ENCODE measurements at regions of chr14 and their contacts with region 1.

Region 1: GRCh38 chr14:104665657-104666522 is 23.5 kb upstream of the INF2 start:
- DNase-seq: peak; percentile 77 to 86
- ATAC-seq: peak; percentile 94 to 95
- H3K4me3 ChIP-seq: no peak overlapping the region
- H3K27ac ChIP-seq: peak overlapping the region; percentile 70 to 85
- H3K4me1 ChIP-seq: peaks cover 22% of the 10 kb centered on the region
- CTCF ChIP-seq: peak; percentile 54
- EP300 ChIP-seq: no peak
- POLR2A ChIP-seq: no peak
- RAD21 ChIP-seq: peak; percentile 59 to 61

Region 2: GRCh38 chr14:104610749-104611310 is 55.1 kb before region 1 on chr14:
- CTCF ChIA-PET with region 1: no interaction called
- POLR2A ChIA-PET with region 1: no interaction called
- DNase-seq: no peak
- ATAC-seq: no peak; a peak in 1 of 6 replicates
- H3K4me3 ChIP-seq: no peak overlapping the region
- H3K27ac ChIP-seq: no peak overlapping the region
- H3K4me1 ChIP-seq: no peaks in the 10 kb centered on the region
- CTCF ChIP-seq: no peak
- EP300 ChIP-seq: no peak
- POLR2A ChIP-seq: no peak
- RAD21 ChIP-seq: no peak

Region 3: GRCh38 chr14:104650057-104650981 is 15.6 kb before region 1 on chr14:
- CTCF ChIA-PET with region 1: interaction called, 15 read pairs
- POLR2A ChIA-PET with region 1: no interaction called
- DNase-seq: peak; percentile 53 to 82
- ATAC-seq: peak; percentile 88 to 95
- H3K4me3 ChIP-seq: peak overlapping the region; percentile 33
- H3K27ac ChIP-seq: peak overlapping the region; percentile 66 to 86
- H3K4me1 ChIP-seq: peaks cover 5% of the 10 kb centered on the region; the same call in 2 of the 3 replicates
- CTCF ChIP-seq: peak; percentile 98
- EP300 ChIP-seq: no peak
- POLR2A ChIP-seq: no peak
- RAD21 ChIP-seq: peak; percentile 87 to 97

Region 4: DNA sequence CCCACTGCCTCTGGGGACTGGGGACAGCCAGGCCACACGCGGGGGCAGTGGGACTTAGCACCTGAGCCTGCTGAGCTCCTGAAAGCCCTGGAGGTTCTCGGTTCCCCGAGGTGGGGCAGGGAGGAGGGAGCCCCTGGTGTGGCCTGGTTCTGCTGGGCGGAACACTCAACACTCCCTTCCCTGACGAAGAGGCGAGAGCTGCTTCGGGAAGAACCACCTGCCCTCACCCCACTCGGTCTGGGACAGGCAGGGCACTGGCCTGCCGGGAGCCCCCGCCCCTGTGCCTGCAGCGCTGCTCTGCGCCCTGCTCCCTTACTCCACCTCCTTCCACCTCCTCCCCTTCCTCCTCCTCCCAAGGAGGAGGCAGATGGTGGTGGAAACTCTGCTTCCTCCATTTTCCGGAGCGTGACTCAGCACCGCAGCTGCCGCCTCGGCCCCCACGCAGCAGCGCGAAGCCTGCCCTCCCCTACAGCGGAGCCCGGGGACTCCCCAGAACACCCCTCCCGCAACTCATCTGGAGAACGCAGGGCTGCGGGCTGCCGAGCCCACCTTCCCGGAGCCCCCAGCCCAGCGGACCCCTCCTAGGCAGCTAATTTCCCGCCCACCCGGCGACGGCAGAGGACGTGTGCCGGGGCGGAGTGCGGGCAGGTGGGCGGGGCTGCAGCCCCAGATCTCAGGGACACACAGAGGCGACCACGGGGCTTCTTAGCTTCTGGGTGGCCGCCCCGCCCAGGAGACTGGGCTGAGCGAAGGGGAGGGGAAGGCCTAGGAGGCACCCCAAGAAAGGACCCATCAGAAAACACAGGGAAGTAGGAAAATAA is 11.8 kb after region 1 on chr14:
- CTCF ChIA-PET with region 1: interaction called, 117 read pairs
- POLR2A ChIA-PET with region 1: interaction called, 19 read pairs
- DNase-seq: peak; percentile 75 to 85
- ATAC-seq: peak; percentile 16 to 49
- H3K4me3 ChIP-seq: peak overlapping the region; percentile 39
- H3K27ac ChIP-seq: peak overlapping the region; percentile 98 to 100
- H3K4me1 ChIP-seq: peaks cover 61% of the 10 kb centered on the region
- CTCF ChIP-seq: no peak
- EP300 ChIP-seq: no peak
- POLR2A ChIP-seq: peak; percentile 68
- RAD21 ChIP-seq: no peak

Region 5: DNA sequence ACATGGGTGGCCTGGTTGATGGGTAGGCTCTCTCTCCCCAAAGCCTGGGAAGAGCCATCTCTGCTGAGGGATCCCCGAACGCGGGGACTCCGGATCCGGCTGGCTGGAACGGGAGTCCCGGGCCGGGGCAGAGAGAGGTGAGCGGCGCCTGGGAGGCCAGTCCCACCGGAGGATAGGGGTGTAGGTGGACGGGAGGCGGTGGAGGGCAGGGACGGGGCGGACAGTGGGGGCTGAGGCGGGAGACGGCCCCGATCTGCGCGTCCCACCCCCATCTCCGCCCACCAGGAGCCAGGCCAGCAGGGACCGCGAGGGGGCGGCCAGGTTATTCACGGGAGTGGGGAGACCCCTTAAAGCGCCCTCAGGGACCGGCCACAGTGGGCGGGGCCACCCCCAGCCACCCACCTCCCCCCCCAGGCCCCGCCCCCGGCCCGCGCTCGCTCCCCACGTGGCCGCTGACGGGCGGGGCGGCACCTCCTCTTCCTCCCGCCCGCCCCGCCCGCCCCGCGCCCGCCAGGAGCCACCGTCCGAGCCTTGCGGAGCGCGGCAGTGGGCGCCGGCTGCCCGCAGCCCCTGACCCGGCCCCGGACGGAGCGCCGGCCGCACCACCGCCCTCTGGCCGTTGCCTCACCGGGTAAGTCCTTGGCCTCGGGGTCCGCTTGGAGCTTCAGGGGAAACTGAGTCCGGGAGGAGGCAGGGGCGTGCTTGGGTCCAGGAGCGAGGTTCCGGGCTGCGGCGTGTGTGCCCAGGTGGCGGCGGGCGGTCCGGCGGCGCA is 23.4 kb after region 1 on chr14 and contains the start of gene INF2:
- CTCF ChIA-PET with region 1: interaction called, 10 read pairs
- POLR2A ChIA-PET with region 1: interaction called, 12 read pairs
- DNase-seq: peak; percentile 84 to 87
- ATAC-seq: peak; percentile 64 to 71
- H3K4me3 ChIP-seq: peak within 1 kb of the TSS; percentile 99
- H3K27ac ChIP-seq: peak within 1 kb of the TSS; percentile 98
- H3K4me1 ChIP-seq: peaks cover 73% of the 10 kb centered on the region
- CTCF ChIP-seq: peak; percentile 26; the same call in 1 of the 3 replicates
- EP300 ChIP-seq: no peak
- POLR2A ChIP-seq: peak; percentile 56
- RAD21 ChIP-seq: peak; percentile 8 to 40; a peak in 4 of 5 replicates
- polyA plus RNA-seq, gene INF2: 23.6 and 24.7 TPM in 2 replicates

Region 6: DNA sequence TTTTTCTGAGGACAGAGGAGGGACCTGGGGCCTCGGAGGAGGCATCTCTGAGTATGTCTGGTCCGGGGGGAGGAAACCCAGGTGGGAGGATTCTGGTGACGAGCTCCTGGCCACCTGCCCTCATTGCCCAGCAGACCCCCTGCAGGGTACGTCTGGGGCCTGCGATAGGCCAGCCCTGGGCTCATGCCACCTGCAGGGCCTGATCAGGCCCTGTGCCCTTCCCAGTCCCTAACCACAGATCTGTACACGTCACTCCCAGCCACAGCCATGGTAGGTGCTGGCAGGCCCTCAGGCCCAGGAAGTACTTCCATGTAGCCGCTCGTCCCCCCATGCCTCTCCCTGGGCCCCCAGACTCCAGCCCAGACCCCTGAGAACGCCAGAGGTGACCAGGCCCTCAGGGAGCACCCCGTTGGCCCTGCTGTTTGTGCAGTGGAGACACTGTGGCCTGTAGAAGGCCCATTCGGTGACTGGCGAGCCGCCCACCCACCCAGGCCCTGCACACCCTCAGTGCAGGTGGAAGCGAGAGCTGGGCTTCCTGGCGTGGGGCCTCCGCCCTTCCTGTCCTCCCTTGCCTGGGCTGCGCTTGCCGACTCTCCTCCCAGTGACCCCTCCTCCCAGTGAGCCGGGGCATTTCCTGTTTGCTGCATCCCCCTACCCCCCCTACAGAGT is 29.2 kb after region 1 on chr14:
- CTCF ChIA-PET with region 1: interaction called, 15 read pairs
- POLR2A ChIA-PET with region 1: no interaction called
- DNase-seq: no peak
- ATAC-seq: 0 out of 6 replicates have a peak, but pooled peaks of 1 of the 2 experiments have one; percentile 6
- H3K4me3 ChIP-seq: no peak overlapping the region
- H3K27ac ChIP-seq: peak overlapping the region; percentile 31 to 98; a peak in 4 of 6 replicates
- H3K4me1 ChIP-seq: peaks cover 95% of the 10 kb centered on the region
- CTCF ChIP-seq: no peak
- EP300 ChIP-seq: no peak
- POLR2A ChIP-seq: no peak
- RAD21 ChIP-seq: no peak

Measured in A549 (cell line).